ENCODE measurements at regions of chr11 and their contacts with region 1.

Region 1: DNA sequence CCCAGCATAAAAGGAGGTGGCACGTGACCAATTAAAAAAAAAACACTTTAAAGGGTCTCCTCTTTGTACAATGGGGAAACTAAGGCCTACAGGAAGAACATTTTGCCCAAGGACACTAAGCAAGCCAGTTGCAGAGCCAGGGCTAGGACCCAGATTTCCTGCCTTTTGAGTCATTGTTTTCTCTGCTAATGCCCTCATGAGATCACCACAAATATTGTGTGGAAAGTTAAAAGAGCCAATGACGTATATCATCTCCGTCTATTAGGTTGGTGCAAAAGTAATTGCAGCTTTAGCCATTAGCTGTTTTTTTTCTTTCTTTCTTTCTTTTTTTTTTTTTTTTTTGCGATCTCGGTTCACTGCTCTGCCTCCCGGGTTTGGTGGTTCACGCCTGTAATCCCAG is 24.1 kb upstream of the LRRC32 start:
- DNase-seq: peak; percentile 49
- H3K4me3 ChIP-seq: no peak overlapping the region
- H3K27ac ChIP-seq: no peak overlapping the region
- H3K27me3 ChIP-seq: no peaks in the 10 kb centered on the region
- CTCF ChIP-seq: no peak

Region 2: GRCh38 chr11:76721755-76722677 is 27.4 kb after region 1 on chr11:
- CTCF ChIA-PET with region 1: interaction called, 10 read pairs
- POLR2A ChIA-PET with region 1: interaction called, 4 read pairs
- DNase-seq: peak; percentile 57
- H3K4me3 ChIP-seq: no peak overlapping the region
- H3K27ac ChIP-seq: no peak overlapping the region
- H3K27me3 ChIP-seq: peaks cover 34% of the 10 kb centered on the region
- CTCF ChIP-seq: peak; percentile 91

Measured in AG04450 (cell line).